Transverse colon (tissue), 4 donors: ENCODE measurements at regions of chr16 and their contacts with region 1.

Region 1: DNA sequence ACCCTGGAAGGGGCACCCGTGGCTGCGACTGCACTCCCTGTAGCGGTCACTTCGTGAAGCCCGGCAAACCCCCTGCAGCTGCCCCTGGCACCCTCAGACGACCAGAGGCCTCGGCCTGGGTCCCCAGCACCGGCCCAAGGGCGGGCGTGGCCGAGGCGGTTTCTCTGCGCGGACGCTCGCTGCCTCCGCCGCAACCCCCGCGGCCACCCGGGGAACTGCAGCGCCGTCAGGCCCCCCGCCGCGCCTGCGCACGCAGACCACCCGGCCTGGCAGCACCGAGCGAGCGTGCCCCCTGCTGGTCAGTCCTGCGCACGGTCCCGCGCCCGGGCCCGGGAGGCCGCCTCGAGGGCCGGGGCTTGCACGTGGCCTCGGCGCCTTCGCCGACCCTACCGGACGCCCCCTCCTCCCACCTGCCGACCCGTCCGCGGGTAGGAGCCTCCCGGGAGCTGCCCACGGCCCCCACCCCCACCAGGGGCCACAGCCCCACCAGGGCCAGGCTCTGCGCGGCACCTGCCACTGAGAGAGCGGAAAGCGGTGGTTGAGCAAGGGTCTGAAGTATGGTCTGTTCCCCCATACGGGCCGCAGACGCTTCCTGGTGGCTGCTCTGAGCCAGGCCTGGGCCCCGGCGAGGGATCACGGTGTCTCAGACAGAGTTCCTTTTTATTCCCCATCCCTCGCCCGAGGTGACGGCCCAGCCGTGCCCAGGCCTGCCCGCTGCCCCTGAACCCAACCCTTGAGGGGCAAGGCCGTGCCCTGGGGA is 11.5 kb upstream of the HS3ST6 start:
- DNase-seq: peak; percentile 93
- H3K4me3 ChIP-seq: peak overlapping the region; percentile 37 to 77 (median 52)
- H3K27ac ChIP-seq: peak overlapping the region; percentile 85 to 92 (median 88)
- H3K4me1 ChIP-seq: peaks cover 4 to 14% (median 8%) of the 10 kb centered on the region in 4 donors
- H3K27me3 ChIP-seq: peaks cover 3% of the 10 kb centered on the region
- CTCF ChIP-seq: peak; percentile 65 to 100 (median 96)
- EP300 ChIP-seq: no peak
- POLR2A ChIP-seq: no peak

Region 2: GRCh38 chr16:1863681-1864460 is 65.9 kb before region 1 on chr16:
- in situ Hi-C with region 1: loop called in 1 of 4 experiments (anchors 5 kb)
- intact Hi-C with region 1: loop called (anchors 1 kb)
- DNase-seq: no peak
- H3K4me3 ChIP-seq: no peak overlapping the region
- H3K27ac ChIP-seq: no peak overlapping the region
- H3K4me1 ChIP-seq: peaks cover 0 to 8% (median 3%) of the 10 kb centered on the region in 4 donors
- H3K27me3 ChIP-seq: peaks cover 32% of the 10 kb centered on the region
- CTCF ChIP-seq: peak; percentile 60 to 73 (median 67)
- EP300 ChIP-seq: no peak
- POLR2A ChIP-seq: no peak

Region 3: DNA sequence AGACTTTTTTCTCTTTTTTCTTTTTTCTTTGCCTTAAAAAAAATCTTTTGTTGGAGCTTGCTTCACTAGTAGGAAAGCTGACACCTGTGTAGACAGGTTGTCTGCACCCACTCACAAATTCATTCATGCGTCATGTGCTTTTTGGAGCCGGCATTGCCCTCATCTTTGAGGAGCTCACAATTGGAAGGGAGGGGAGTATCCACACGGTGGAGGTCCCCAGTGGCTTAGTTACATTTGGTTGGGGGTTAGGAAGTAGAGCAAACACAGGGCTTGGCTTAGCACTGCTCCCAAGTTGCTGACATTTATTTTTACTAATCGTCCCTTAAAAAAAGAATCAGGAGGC is 39.1 kb before region 1 on chr16:
- in situ Hi-C with region 1: no loop called
- intact Hi-C with region 1: loop called (anchors 1 kb)
- DNase-seq: no peak
- H3K4me3 ChIP-seq: no peak overlapping the region
- H3K27ac ChIP-seq: no peak overlapping the region
- H3K4me1 ChIP-seq: peaks cover 0 to 28% (median 17%) of the 10 kb centered on the region in 4 donors
- H3K27me3 ChIP-seq: peaks cover 9% of the 10 kb centered on the region
- CTCF ChIP-seq: no peak
- EP300 ChIP-seq: no peak
- POLR2A ChIP-seq: no peak

Region 4: GRCh38 chr16:1964506-1965395 is 35.0 kb after region 1 on chr16 and contains the start of gene RPS2:
- in situ Hi-C with region 1: no loop called
- intact Hi-C with region 1: no loop called
- DNase-seq: peak; percentile 99
- H3K4me3 ChIP-seq: peak within 1 kb of the TSS; percentile 84 to 99 (median 90)
- H3K27ac ChIP-seq: peak within 1 kb of the TSS; percentile 96 to 99 (median 98)
- H3K4me1 ChIP-seq: peaks cover 8 to 44% (median 35%) of the 10 kb centered on the region in 4 donors
- H3K27me3 ChIP-seq: no peaks in the 10 kb centered on the region
- CTCF ChIP-seq: peak in 1 of 5 experiments; percentile 11
- EP300 ChIP-seq: no peak
- POLR2A ChIP-seq: peak; percentile 99
- total RNA-seq, gene RPS2: 896 to 2,085 (median 1,613) TPM